PC-9 (cell line): ENCODE measurements at regions of chr17 and their contacts with region 1.

Region 1: GRCh38 chr17:80485846-80486245 is 9.4 kb upstream of the NPTX1 start:
- DNase-seq: no peak
- H3K4me3 ChIP-seq: no peak overlapping the region
- H3K27ac ChIP-seq: no peak overlapping the region
- H3K4me1 ChIP-seq: peaks cover 24% of the 10 kb centered on the region
- H3K27me3 ChIP-seq: no peaks in the 10 kb centered on the region
- CTCF ChIP-seq: no peak

Region 2: DNA sequence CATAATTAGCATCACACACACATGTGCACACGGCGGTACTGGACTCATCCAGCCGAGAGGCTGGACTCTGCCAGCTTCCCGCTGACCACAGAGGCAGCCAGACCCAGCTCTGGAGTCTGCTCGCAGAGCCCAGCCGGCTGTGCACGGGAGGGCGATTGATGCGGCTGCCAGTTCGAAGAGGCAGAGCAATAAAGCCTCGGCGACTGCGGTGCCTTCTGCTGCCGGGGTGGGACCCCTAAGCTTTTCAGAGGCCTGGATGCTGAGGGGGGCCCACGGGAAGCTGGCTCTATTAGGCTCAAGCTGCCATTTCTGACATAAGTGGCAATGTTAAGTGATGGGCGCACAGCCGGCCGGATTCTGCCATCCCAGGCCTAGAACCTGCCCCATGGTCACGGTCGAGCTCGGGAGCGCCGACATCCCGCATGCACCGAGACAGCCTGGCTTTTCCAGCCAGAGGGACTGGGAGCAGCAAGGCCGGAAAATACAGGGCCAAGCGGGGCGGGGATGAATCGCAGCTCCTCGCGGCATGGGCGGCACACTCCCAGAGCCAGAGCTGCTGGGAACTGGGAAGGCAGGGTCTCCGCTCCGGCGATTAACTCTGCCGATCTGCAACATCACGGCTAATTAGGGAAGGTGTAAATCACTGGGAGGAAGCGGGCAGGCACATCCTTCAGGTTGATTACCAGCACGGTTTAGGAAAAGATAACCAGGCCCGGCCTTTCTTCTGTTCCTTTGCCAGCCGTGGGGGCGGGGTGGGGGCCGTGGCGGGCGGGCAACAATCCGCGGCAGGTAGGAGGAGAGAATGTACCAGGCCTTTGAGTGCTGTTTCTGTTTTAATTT is 507.9 kb before region 1 on chr17:
- CTCF ChIA-PET with region 1: no interaction called
- POLR2A ChIA-PET with region 1: no interaction called
- intact Hi-C with region 1: no loop called
- DNase-seq: no peak
- H3K4me3 ChIP-seq: no peak overlapping the region
- H3K27ac ChIP-seq: no peak overlapping the region
- H3K4me1 ChIP-seq: no peaks in the 10 kb centered on the region
- H3K27me3 ChIP-seq: no peaks in the 10 kb centered on the region
- CTCF ChIP-seq: no peak

Region 3: GRCh38 chr17:80389011-80389995 is 96.5 kb before region 1 on chr17:
- CTCF ChIA-PET with region 1: no interaction called
- POLR2A ChIA-PET with region 1: no interaction called
- intact Hi-C with region 1: no loop called
- DNase-seq: no peak
- H3K4me3 ChIP-seq: no peak overlapping the region
- H3K27ac ChIP-seq: no peak overlapping the region
- H3K4me1 ChIP-seq: no peaks in the 10 kb centered on the region
- H3K27me3 ChIP-seq: no peaks in the 10 kb centered on the region
- CTCF ChIP-seq: no peak

Region 4: DNA sequence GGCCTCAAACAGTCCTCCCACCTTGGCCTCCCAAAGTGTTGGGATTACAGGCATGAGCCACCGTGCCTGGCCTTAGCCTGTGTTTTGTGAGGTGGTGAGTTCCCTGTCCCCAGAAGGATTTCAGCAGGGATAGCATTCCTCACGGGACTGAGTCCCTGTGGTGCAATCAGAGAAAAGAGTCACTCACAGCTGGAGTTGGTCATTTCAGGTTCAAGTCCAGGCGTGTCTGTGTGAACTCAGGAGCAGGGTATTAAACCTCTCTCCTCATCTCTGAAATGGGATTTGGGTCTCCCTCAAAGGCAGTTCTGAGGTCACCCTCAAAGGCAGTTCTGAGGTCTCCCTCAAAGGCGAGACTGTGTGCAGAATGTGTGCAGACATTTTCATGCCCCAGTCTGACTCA is 38.1 kb before region 1 on chr17:
- CTCF ChIA-PET with region 1: no interaction called
- POLR2A ChIA-PET with region 1: interaction called, 30 read pairs
- intact Hi-C with region 1: no loop called
- DNase-seq: no peak
- H3K4me3 ChIP-seq: no peak overlapping the region
- H3K27ac ChIP-seq: no peak overlapping the region
- H3K4me1 ChIP-seq: no peaks in the 10 kb centered on the region
- H3K27me3 ChIP-seq: peaks cover 6% of the 10 kb centered on the region; the same call in 1 of the 2 replicates
- CTCF ChIP-seq: no peak

Region 5: GRCh38 chr17:80474231-80474960 is 11.4 kb before region 1 on chr17:
- CTCF ChIA-PET with region 1: interaction called, 5 read pairs
- POLR2A ChIA-PET with region 1: interaction called, 14 read pairs
- intact Hi-C with region 1: no loop called
- DNase-seq: no peak
- H3K4me3 ChIP-seq: no peak overlapping the region; the same call in 1 of the 2 replicates
- H3K27ac ChIP-seq: no peak overlapping the region
- H3K4me1 ChIP-seq: 0 out of 2 replicates have a peak, but pooled peaks cover 9% of the 10 kb centered on the region
- H3K27me3 ChIP-seq: peaks cover 25% of the 10 kb centered on the region
- CTCF ChIP-seq: no peak

Region 6: GRCh38 chr17:80526116-80526910 is 40.5 kb after region 1 on chr17:
- CTCF ChIA-PET with region 1: no interaction called
- POLR2A ChIA-PET with region 1: interaction called, 19 read pairs
- intact Hi-C with region 1: no loop called
- DNase-seq: no peak
- H3K4me3 ChIP-seq: no peak overlapping the region
- H3K27ac ChIP-seq: no peak overlapping the region
- H3K4me1 ChIP-seq: no peaks in the 10 kb centered on the region
- H3K27me3 ChIP-seq: no peaks in the 10 kb centered on the region
- CTCF ChIP-seq: no peak

Region 7: GRCh38 chr17:80544655-80545498 is 59.0 kb after region 1 on chr17 and contains the start of gene RPTOR:
- CTCF ChIA-PET with region 1: no interaction called
- POLR2A ChIA-PET with region 1: no interaction called
- intact Hi-C with region 1: loop called (anchors 5 kb)
- DNase-seq: peak; percentile 48 to 81
- H3K4me3 ChIP-seq: peak within 1 kb of the TSS; percentile 98
- H3K27ac ChIP-seq: peak within 1 kb of the TSS; percentile 53
- H3K4me1 ChIP-seq: peaks cover 29% of the 10 kb centered on the region
- H3K27me3 ChIP-seq: no peaks in the 10 kb centered on the region
- CTCF ChIP-seq: no peak
- total RNA-seq, gene RPTOR: 50.8 and 53.5 TPM in 2 replicates